ENCODE measurements at regions of chr22 and their contacts with region 1.

Region 1: DNA sequence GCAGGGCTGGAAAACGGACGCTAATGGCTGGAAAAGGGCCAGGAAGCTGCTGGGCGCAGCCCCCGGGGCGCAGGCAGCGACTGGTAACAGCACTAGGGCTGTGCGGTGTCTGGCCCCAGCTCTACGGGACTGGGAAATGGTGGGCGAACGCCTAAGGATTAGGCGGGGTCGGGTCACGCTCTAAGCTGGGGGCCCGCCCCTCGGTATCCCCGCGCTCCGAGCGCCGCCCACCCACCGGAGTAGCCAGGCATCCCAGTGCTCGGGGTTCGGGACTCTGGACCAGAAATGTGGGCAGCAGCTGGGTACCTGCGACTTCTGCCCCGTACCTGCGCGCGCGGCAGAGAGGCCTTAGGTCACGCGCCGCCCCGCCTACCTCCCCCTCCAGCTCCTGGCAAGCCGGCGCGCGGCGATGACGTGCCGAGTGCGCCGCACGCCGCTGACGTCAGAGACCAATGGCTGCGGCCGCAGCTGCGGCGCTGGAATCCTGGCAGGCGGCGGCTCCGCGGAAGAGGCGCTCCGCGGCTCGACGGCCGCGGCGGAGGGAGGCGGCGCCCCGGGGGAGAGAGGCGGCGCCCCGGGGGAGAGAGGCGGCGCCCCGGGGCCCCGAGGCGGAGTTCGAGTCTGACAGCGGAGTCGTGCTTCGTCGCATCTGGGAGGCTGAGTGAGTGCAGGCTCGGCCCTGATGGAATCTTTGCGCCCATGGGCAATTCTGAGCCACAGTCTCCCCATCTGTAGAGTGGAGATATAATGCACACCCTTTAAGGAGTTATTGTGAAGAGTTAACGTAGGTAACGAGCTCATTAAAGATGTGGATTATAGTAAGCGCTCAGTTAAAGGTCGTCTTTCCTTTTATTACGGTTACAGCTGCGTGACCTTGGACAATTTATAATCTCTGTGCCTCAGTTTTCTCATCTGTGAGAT is at the starts of genes HPS4 and SRRD:
- DNase-seq: peak; percentile 74 to 91 (median 80)
- H3K4me3 ChIP-seq: peak within 1 kb of the TSS; percentile 72 to 100 (median 98)
- H3K27ac ChIP-seq: peak within 1 kb of the TSS; percentile 72 to 99 (median 95)
- H3K27me3 ChIP-seq: no peaks in the 10 kb centered on the region
- CTCF ChIP-seq: peak in 23 of 56 donors; percentile 11 to 55 (median 25)
- total RNA-seq, gene HPS4: 31.0 to 59.1 (median 45.3) TPM
- total RNA-seq, gene SRRD: 15.0 to 37.8 (median 23.3) TPM

Region 2: GRCh38 chr22:26416670-26417250 is 66.9 kb before region 1 on chr22:
- intact Hi-C with region 1: no loop called
- DNase-seq: no peak
- H3K4me3 ChIP-seq: no peak overlapping the region
- H3K27ac ChIP-seq: no peak overlapping the region
- H3K27me3 ChIP-seq: peaks cover 0 to 7% (median 0%) of the 10 kb centered on the region in 45 donors
- CTCF ChIP-seq: no peak

Region 3: GRCh38 chr22:26428515-26429457 is 54.9 kb before region 1 on chr22 and contains the start of gene ASPHD2:
- intact Hi-C with region 1: loop called (anchors 5 kb)
- DNase-seq: peak in 5 of 10 donors; percentile 36 to 79 (median 72)
- H3K4me3 ChIP-seq: peak within 1 kb of the TSS; percentile 49 to 80 (median 67)
- H3K27ac ChIP-seq: peak within 1 kb of the TSS in 58 of 59 donors; percentile 5 to 93 (median 80)
- H3K27me3 ChIP-seq: no peaks in the 10 kb centered on the region
- CTCF ChIP-seq: peak in 3 of 56 donors; percentile 7 to 17 (median 10)
- total RNA-seq, gene ASPHD2: 4.8 to 24.5 (median 15.5) TPM

Region 4: GRCh38 chr22:26511857-26512793 is 28.4 kb after region 1 on chr22 and contains the start of gene TFIP11:
- intact Hi-C with region 1: loop called in 1 of 2 experiments (anchors 1 kb)
- DNase-seq: peak; percentile 93 to 99 (median 96)
- H3K4me3 ChIP-seq: peak within 1 kb of the TSS; percentile 52 to 100 (median 91)
- H3K27ac ChIP-seq: peak within 1 kb of the TSS in 55 of 59 donors; percentile 9 to 85 (median 69)
- H3K27me3 ChIP-seq: no peaks in the 10 kb centered on the region
- CTCF ChIP-seq: peak in 26 of 56 donors; percentile 9 to 54 (median 25)
- total RNA-seq, gene TFIP11: 27.4 to 51.0 (median 35.3) TPM

Region 5: GRCh38 chr22:27088026-27088425 is 604.3 kb after region 1 on chr22:
- intact Hi-C with region 1: no loop called
- DNase-seq: no peak
- H3K4me3 ChIP-seq: no peak overlapping the region
- H3K27ac ChIP-seq: no peak overlapping the region
- H3K27me3 ChIP-seq: peaks cover 0 to 39% (median 0%) of the 10 kb centered on the region in 45 donors
- CTCF ChIP-seq: no peak

Measured in dorsolateral prefrontal cortex (tissue), 120 donors.